Lower leg skin (tissue), 4 donors: ENCODE measurements at regions of chr10 and their contacts with region 1.

Region 1: GRCh38 chr10:131885391-131886161 is 15.2 kb upstream of the PPP2R2D start:
- DNase-seq: peak; percentile 51 to 93
- H3K4me3 ChIP-seq: no peak overlapping the region
- CTCF ChIP-seq: peak in 1 of 3 donors; percentile 77
- POLR2A ChIP-seq: no peak

Region 2: GRCh38 chr10:131860806-131861440 is 24.7 kb before region 1 on chr10:
- intact Hi-C with region 1: no loop called
- DNase-seq: peak in 1 of 2 donors; percentile 71
- H3K4me3 ChIP-seq: no peak overlapping the region
- CTCF ChIP-seq: no peak
- POLR2A ChIP-seq: no peak

Region 3: GRCh38 chr10:132133005-132133404 is 247.4 kb after region 1 on chr10:
- intact Hi-C with region 1: loop called (anchors 10 kb)
- DNase-seq: no peak
- H3K4me3 ChIP-seq: no peak overlapping the region
- CTCF ChIP-seq: no peak
- POLR2A ChIP-seq: no peak